Common myeloid progenitor, CD34-positive (primary cell): ENCODE measurements at regions of chr12 and their contacts with region 1.

Region 1: GRCh38 chr12:51424662-51425438 is at the start of gene SLC4A8:
- DNase-seq: peak; percentile 80 to 91 (median 90)
- H3K4me3 ChIP-seq: peak within 1 kb of the TSS; percentile 44 to 78 (median 57)
- H3K27ac ChIP-seq: no peak within 1 kb of the TSS
- H3K4me1 ChIP-seq: peaks cover 5 to 13% (median 11%) of the 10 kb centered on the region in 4 experiments
- H3K27me3 ChIP-seq: peaks cover 0 to 3% (median 0%) of the 10 kb centered on the region in 5 experiments

Region 2: DNA sequence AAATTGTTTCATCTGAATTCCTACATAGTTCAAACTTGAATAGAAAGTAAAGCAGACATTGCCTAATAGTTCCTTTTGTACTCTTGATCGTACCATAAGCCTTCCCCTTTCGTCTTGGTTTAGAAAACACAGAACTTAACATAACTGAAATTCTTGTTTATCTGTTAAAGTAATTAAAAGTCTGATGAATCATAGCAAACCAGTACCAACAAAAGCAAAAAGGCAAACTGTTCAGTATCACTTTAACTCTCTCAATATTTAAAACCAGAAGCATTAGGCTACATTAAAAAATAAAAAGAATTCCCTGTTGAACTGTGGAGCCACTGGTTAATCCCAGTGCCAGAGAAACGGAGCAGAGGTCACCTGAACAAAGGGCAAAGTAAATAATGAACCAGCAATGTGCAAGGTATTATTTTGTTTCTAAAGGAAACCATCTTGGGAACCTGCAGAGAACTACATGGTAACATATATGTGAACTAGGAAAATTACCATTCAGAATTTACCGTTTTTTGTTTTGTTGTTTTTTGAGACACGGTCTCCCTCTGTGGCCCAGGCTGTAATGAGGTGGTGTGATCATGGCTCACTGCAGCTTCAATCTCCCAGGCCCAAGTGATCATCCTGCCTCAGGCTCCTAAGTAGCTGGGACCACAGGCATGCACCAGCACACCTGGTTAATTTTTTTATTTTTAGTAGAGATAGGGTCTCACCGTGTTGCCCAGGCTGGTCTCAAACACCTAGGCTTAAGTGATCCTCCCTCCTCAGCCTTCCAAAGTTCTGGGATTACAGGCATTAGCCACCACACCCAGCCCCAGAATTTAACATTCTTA is 489.7 kb before region 1 on chr12:
- CTCF ChIA-PET with region 1: no interaction called
- POLR2A ChIA-PET with region 1: no interaction called
- DNase-seq: peak in 2 of 3 donors; percentile 44 to 57
- H3K4me3 ChIP-seq: peak overlapping the region in 4 of 7 experiments; percentile 23 to 68 (median 46)
- H3K27ac ChIP-seq: peak overlapping the region; percentile 36 to 73
- H3K4me1 ChIP-seq: peaks cover 8 to 43% (median 32%) of the 10 kb centered on the region in 4 experiments
- H3K27me3 ChIP-seq: no peaks in the 10 kb centered on the region

Region 3: GRCh38 chr12:51326762-51327439 is 97.9 kb before region 1 on chr12:
- CTCF ChIA-PET with region 1: no interaction called
- POLR2A ChIA-PET with region 1: no interaction called
- DNase-seq: peak; percentile 87 to 94 (median 93)
- H3K4me3 ChIP-seq: peak overlapping the region in 5 of 7 experiments; percentile 32 to 57 (median 43)
- H3K27ac ChIP-seq: peak overlapping the region; percentile 75 to 88
- H3K4me1 ChIP-seq: peaks cover 55 to 84% (median 82%) of the 10 kb centered on the region in 4 experiments
- H3K27me3 ChIP-seq: no peaks in the 10 kb centered on the region

Region 4: DNA sequence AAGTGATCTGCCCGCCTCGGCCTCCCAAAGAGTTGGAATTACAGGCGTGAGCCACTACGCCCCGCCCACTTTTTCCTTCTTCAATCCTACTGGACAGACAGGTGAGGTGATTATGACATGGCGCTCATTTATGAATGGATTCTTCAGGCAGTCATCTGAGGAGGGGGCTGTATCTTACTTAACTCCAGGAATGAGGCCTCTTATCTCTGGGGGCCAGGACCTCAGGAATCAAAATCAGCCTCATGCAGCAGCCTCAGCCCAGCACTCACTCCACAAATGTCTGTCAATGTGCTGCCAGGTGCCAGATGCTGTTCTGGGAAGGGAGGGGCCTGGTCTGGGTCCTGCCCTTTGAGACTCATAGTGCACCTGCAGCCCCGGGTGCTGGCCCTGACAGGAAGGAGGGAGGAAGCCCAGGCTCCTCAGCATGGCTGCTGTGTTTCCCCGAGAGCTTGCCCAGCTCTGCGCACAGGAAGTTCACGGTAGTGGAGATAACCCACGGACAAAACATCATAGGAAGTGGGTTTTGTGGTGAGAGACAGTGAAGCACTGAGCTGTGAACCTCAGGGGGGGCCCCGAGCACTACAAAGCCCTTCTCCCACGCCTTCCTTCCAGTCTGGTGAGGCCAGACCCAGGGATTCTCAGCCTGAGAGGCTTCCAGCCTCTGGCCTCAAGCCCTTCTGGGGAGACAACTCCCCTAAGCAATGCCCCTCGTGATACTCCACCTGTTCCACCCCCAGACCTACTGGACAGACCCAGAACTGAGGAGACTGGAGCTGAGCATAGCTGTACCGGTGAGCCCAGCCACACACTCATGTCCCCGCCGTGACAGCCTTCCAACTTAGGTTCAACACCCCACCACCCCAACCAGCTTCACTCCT is 56.0 kb before region 1 on chr12:
- CTCF ChIA-PET with region 1: interaction called, 33 read pairs
- POLR2A ChIA-PET with region 1: no interaction called
- DNase-seq: peak; percentile 100
- H3K4me3 ChIP-seq: peak overlapping the region in 4 of 7 experiments; percentile 3 to 60 (median 44)
- H3K27ac ChIP-seq: peak overlapping the region; percentile 8 to 15
- H3K4me1 ChIP-seq: peaks cover 13 to 51% (median 36%) of the 10 kb centered on the region in 4 experiments
- H3K27me3 ChIP-seq: no peaks in the 10 kb centered on the region

Region 5: DNA sequence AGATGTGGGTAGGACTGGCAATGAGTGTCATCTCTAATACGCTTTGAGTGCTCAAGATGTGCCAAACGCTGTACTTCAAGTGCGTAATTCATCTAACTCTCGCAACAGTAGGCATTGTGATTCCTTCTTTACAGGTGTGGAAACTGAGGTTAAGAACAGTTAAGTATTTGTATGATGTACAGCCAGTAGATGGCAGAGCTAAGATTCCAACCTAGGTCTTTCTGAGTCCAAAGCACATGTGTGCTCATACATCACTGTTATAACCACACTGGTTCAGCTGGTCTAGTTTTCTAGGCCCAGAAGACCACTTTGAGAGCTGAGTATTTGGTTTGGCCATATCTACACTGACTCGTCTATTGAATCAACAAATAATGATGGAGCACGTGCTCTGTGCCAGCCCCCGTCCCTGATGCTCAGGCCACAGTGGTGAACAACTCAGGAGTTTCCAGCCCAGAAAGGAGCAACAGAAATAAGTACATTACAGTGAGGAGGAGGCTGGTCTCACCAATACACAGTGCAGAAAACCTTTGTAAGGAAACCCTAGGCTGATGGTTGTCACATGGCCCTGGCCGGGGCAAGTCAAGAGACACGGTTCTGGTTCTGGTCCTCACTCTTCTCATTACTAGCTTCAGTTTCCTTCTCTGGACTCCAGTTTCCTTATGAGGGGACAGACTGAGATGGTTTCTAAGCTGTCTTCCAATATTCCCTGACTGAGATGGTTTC is 96.9 kb after region 1 on chr12:
- CTCF ChIA-PET with region 1: interaction called, 12 read pairs
- POLR2A ChIA-PET with region 1: interaction called, 3 read pairs
- DNase-seq: no peak
- H3K4me3 ChIP-seq: no peak overlapping the region
- H3K27ac ChIP-seq: no peak overlapping the region
- H3K4me1 ChIP-seq: peaks cover 0 to 4% (median 1%) of the 10 kb centered on the region in 4 experiments
- H3K27me3 ChIP-seq: no peaks in the 10 kb centered on the region

Region 6: DNA sequence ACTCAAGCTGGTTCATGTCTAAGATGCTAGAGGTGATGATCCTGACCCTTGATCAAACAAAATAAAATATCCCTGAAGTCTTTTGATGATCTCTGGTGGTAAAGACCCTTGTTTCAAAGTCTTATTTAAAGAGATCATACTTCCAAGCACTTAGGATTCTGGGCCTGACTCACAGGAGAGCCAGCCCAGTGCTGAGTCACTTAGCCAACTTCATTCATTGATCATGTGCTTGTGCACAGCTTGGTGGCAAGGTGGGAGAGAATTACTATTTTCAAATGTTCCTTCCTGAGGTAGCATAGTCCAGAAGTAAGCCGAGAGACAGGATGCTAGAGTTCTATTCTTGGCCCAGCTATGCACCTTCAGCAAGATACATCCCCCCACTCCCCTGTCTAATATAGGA is 206.7 kb after region 1 on chr12:
- CTCF ChIA-PET with region 1: no interaction called
- POLR2A ChIA-PET with region 1: no interaction called
- DNase-seq: peak in 2 of 3 donors; percentile 20 to 33
- H3K4me3 ChIP-seq: no peak overlapping the region
- H3K27ac ChIP-seq: no peak overlapping the region
- H3K4me1 ChIP-seq: no peaks in the 10 kb centered on the region
- H3K27me3 ChIP-seq: no peaks in the 10 kb centered on the region

Region 7: GRCh38 chr12:51678086-51678724 is 253.4 kb after region 1 on chr12:
- CTCF ChIA-PET with region 1: interaction called, 10 read pairs
- POLR2A ChIA-PET with region 1: no interaction called
- DNase-seq: peak; percentile 60 to 73 (median 67)
- H3K4me3 ChIP-seq: no peak overlapping the region
- H3K27ac ChIP-seq: no peak overlapping the region
- H3K4me1 ChIP-seq: peaks cover 3 to 9% (median 6%) of the 10 kb centered on the region in 4 experiments
- H3K27me3 ChIP-seq: no peaks in the 10 kb centered on the region